ENCODE measurements at regions of chr11 and their contacts with region 1.

Region 1: GRCh38 chr11:74030723-74031676 is 22.1 kb upstream of the UCP3 start:
- DNase-seq: no peak
- ATAC-seq: peak; percentile 52
- H3K4me3 ChIP-seq: no peak overlapping the region
- H3K4me3 Mint-ChIP-seq: peak overlapping the region in 6 of 10 donors; percentile 3 to 70 (median 16)
- H3K27ac ChIP-seq: no peak overlapping the region
- H3K27ac Mint-ChIP-seq: peak overlapping the region in 8 of 9 donors; percentile 3 to 91 (median 44)
- H3K4me1 ChIP-seq: peaks cover 0 to 7% of the 10 kb centered on the region in 2 donors
- H3K4me1 Mint-ChIP-seq: peaks cover 17 to 39% (median 25%) of the 10 kb centered on the region in 7 donors
- H3K27me3 ChIP-seq: no peaks in the 10 kb centered on the region
- H3K27me3 Mint-ChIP-seq: no peaks in the 10 kb centered on the region

Region 2: DNA sequence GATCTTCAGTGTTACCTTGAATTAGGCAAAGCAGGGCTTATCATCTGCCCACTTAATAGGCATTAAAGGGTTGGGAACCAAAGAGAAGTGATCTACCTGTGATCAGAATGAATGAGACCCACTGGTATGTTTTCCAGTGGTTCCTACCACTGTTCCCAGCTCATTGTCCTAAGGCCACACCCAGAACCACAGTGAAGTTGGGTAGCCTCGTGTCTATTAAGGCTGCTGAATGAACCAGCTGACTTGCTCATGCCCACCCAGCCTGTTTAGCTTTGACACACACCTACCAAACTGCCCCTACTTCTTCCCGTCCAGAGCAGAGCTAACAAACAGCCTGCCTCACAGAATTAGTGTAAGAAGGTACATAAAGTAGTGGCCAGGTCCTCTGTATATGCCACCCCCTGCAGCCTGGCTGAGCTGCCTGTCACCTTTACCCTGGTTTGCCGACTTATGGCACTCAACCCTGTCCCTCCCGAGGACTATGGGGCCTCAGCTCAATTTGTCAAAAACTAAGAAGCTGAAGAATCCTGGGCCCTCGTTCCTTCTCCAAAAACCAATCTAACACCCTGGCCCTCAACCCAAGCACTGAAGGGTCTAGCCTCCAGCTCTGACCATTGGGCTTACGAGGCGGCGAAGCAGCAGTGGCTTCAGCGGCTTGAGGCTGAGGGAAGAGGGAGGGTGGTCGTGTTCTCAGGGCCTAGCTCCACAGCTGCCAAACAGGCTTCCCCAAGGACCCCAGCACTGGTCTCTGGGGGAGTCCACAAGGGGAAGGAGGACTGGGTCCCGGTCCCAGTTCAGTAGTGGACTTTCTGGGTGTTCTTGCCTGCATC is 58.2 kb before region 1 on chr11:
- CTCF ChIA-PET with region 1: interaction called, 50 read pairs
- POLR2A ChIA-PET with region 1: interaction called, 34 read pairs
- intact Hi-C with region 1: no loop called
- DNase-seq: no peak
- ATAC-seq: no peak
- H3K4me3 ChIP-seq: no peak overlapping the region
- H3K4me3 Mint-ChIP-seq: peak overlapping the region in 9 of 10 donors; percentile 0 to 96 (median 58)
- H3K27ac ChIP-seq: peak overlapping the region; percentile 59
- H3K27ac Mint-ChIP-seq: peak overlapping the region; percentile 79 to 100 (median 98)
- H3K4me1 ChIP-seq: peaks cover 86 to 93% of the 10 kb centered on the region in 2 donors
- H3K4me1 Mint-ChIP-seq: peaks cover 74 to 100% (median 89%) of the 10 kb centered on the region in 7 donors
- H3K27me3 ChIP-seq: no peaks in the 10 kb centered on the region
- H3K27me3 Mint-ChIP-seq: no peaks in the 10 kb centered on the region

Region 3: DNA sequence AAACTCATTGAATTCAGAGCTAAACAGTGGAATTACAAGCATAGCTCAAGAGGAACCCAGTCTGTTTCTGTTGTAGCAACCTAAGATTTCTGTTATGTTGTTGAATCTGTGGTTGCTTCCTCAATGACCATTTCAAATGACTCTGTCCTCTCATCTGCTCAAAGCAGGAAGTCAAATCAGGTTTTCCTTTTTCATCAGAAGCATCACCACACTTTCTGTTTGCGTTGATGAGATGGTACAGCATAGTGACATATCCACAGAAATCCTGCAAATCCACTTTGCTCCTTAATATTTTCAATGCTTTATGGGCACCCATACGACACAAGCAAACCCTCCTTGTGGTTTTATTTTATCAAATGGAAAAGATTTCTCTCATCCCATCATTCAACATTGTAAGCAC is 35.8 kb before region 1 on chr11:
- CTCF ChIA-PET with region 1: interaction called, 13 read pairs
- POLR2A ChIA-PET with region 1: interaction called, 5 read pairs
- intact Hi-C with region 1: loop called in 1 of 2 experiments (anchors 1 kb)
- DNase-seq: peak in 8 of 9 donors; percentile 16 to 93 (median 90)
- ATAC-seq: peak; percentile 85
- H3K4me3 ChIP-seq: peak overlapping the region; percentile 4
- H3K4me3 Mint-ChIP-seq: peak overlapping the region; percentile 65 to 92 (median 80)
- H3K27ac ChIP-seq: peak overlapping the region; percentile 92
- H3K27ac Mint-ChIP-seq: peak overlapping the region; percentile 93 to 100 (median 97)
- H3K4me1 ChIP-seq: peaks cover 33 to 45% of the 10 kb centered on the region in 2 donors
- H3K4me1 Mint-ChIP-seq: peaks cover 26 to 81% (median 71%) of the 10 kb centered on the region in 7 donors
- H3K27me3 ChIP-seq: no peaks in the 10 kb centered on the region
- H3K27me3 Mint-ChIP-seq: no peaks in the 10 kb centered on the region

Region 4: GRCh38 chr11:74004759-74005615 is 26.0 kb before region 1 on chr11:
- CTCF ChIA-PET with region 1: interaction called, 8 read pairs
- POLR2A ChIA-PET with region 1: interaction called, 5 read pairs
- intact Hi-C with region 1: loop called in 1 of 2 experiments (anchors 2 kb)
- DNase-seq: peak; percentile 55 to 94 (median 91)
- ATAC-seq: peak; percentile 100
- H3K4me3 ChIP-seq: peak overlapping the region; percentile 44
- H3K4me3 Mint-ChIP-seq: peak overlapping the region; percentile 74 to 91 (median 83)
- H3K27ac ChIP-seq: peak overlapping the region; percentile 75
- H3K27ac Mint-ChIP-seq: peak overlapping the region; percentile 92 to 99 (median 96)
- H3K4me1 ChIP-seq: peaks cover 60 to 62% of the 10 kb centered on the region in 2 donors
- H3K4me1 Mint-ChIP-seq: peaks cover 48 to 85% (median 78%) of the 10 kb centered on the region in 7 donors
- H3K27me3 ChIP-seq: no peaks in the 10 kb centered on the region
- H3K27me3 Mint-ChIP-seq: no peaks in the 10 kb centered on the region

Region 5: GRCh38 chr11:74011360-74012073 is 19.5 kb before region 1 on chr11:
- CTCF ChIA-PET with region 1: interaction called, 3 read pairs
- POLR2A ChIA-PET with region 1: interaction called, 6 read pairs
- intact Hi-C with region 1: loop called in 1 of 2 experiments (anchors 1 kb)
- DNase-seq: peak in 8 of 9 donors; percentile 16 to 67 (median 46)
- ATAC-seq: peak; percentile 84
- H3K4me3 ChIP-seq: no peak overlapping the region
- H3K4me3 Mint-ChIP-seq: peak overlapping the region; percentile 55 to 81 (median 66)
- H3K27ac ChIP-seq: peak overlapping the region; percentile 61
- H3K27ac Mint-ChIP-seq: peak overlapping the region; percentile 80 to 98 (median 94)
- H3K4me1 ChIP-seq: peaks cover 83 to 95% of the 10 kb centered on the region in 2 donors
- H3K4me1 Mint-ChIP-seq: peaks cover 46 to 99% (median 87%) of the 10 kb centered on the region in 7 donors
- H3K27me3 ChIP-seq: no peaks in the 10 kb centered on the region
- H3K27me3 Mint-ChIP-seq: no peaks in the 10 kb centered on the region

Region 6: GRCh38 chr11:74106125-74106524 is 75.1 kb after region 1 on chr11:
- CTCF ChIA-PET with region 1: no interaction called
- POLR2A ChIA-PET with region 1: no interaction called
- intact Hi-C with region 1: no loop called
- DNase-seq: no peak
- ATAC-seq: no peak
- H3K4me3 ChIP-seq: no peak overlapping the region
- H3K4me3 Mint-ChIP-seq: no peak overlapping the region
- H3K27ac ChIP-seq: no peak overlapping the region
- H3K27ac Mint-ChIP-seq: no peak overlapping the region
- H3K4me1 ChIP-seq: no peaks in the 10 kb centered on the region
- H3K4me1 Mint-ChIP-seq: peaks cover 0 to 5% (median 0%) of the 10 kb centered on the region in 7 donors
- H3K27me3 ChIP-seq: no peaks in the 10 kb centered on the region
- H3K27me3 Mint-ChIP-seq: no peaks in the 10 kb centered on the region

Measured in naive thymus-derived CD4-positive, alpha-beta T cell (primary cell).